Endothelial cell of umbilical vein (primary cell): ENCODE measurements at regions of chr20 and their contacts with region 1.

Region 1: DNA sequence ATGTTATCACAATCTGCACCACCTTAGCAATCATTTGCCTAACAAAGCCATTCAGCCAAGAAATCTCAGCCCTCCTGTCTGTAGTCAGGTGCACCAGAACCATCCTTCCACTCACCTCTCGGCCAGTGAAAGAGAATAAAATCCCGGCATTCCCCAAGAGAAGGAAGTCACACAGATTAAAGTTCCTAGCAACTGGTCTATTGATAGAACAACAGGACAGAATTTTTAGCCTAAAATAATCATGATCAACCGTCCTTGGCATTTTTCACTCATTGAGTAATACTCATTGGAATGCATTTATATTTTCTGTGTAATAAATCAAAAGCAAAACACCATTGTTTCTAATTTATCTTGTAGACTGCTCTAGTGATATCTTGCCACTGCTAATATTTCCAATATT is 85.7 kb upstream of the CDH4 start:
- DNase-seq: no peak
- H3K4me3 ChIP-seq: no peak overlapping the region
- H3K27ac ChIP-seq: no peak overlapping the region
- H3K4me1 ChIP-seq: no peaks in the 10 kb centered on the region
- H3K27me3 ChIP-seq: no peaks in the 10 kb centered on the region
- CTCF ChIP-seq: no peak
- POLR2A ChIP-seq: no peak

Region 2: DNA sequence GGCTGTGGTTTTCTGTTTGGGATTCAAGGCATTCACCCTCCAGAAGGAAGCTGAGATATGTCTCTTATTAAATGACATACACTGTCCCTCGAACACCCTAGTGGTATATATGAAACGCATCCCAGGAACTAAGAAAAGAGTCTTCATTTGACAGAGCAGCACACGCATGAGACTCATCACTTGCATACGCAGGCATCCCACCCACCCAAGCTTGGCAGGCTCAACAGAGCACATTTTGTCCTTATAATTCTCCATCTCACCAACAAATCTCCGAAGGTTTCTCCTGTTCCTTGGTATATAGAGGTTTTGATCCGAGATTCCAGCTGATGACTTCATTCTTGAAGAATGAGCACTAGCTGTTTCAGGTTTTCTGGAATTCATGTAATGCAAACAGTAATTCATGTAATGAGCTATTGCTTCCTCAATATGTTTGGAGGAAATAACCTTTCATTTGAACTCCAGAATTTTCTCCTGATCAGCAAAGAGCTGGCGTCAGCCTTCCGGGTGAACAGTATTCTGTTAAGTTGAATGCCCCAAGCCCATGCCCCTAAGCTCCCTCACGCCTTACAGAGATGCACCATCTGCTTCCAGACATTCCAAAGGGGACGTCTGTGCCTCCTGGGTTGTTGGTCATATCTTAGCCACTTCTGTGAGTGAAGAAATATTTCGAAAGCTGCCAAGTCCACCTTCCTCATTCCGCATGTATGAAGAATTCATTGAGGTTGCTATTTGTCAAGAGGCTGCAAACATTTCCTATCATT is 19.7 kb after region 1 on chr20:
- CTCF ChIA-PET with region 1: no interaction called
- POLR2A ChIA-PET with region 1: no interaction called
- dilution Hi-C with region 1: no loop called
- intact Hi-C with region 1: loop called (anchors 1 kb)
- DNase-seq: peak; percentile 30
- H3K4me3 ChIP-seq: no peak overlapping the region
- H3K27ac ChIP-seq: no peak overlapping the region
- H3K4me1 ChIP-seq: no peaks in the 10 kb centered on the region
- H3K27me3 ChIP-seq: no peaks in the 10 kb centered on the region
- CTCF ChIP-seq: no peak
- POLR2A ChIP-seq: no peak